Endothelial cell of umbilical vein (primary cell): ENCODE measurements at regions of chr1 and their contacts with region 1.

Region 1: DNA sequence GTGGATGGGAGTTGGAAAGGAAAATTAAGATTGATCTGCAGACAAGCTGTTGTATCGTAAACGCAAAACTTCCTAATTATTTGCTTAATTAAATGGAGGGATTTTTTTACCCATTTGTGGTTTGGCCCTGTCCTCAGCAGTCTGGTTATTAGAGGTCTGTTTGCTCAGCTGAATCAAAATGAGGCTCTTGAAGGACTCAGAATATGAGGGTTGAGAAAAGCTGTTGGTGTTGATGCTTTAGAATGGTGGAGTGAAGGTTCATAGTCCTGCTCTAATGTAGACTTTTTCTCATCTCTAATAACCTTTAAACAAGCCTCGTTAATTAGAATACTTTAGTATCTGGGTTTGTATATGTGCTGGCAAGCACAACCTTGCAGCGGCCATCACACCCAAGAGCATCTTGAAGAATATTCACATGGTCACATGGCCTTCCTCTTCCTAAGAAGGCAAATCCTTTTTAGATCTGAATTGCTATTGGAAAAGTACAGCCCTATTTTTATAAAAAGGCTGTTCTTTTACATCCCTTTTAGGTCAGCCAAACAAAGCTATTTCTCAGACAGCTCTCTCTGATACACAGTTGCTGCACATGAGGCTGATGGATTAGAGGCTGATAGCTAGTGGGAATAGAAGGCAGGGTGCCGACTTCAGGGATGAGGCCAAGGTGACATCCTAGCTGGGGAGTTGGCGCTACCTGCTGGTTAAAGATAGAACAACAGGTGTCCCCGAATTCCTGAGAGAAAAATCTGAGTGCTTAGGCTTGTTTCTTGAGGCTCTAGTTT is 53.8 kb downstream of the MACF1 start:
- DNase-seq: peak; percentile 75
- H3K4me3 ChIP-seq: no peak overlapping the region
- H3K27ac ChIP-seq: no peak overlapping the region
- H3K4me1 ChIP-seq: no peaks in the 10 kb centered on the region
- H3K27me3 ChIP-seq: no peaks in the 10 kb centered on the region
- CTCF ChIP-seq: peak; percentile 70 to 71
- POLR2A ChIP-seq: no peak

Region 2: DNA sequence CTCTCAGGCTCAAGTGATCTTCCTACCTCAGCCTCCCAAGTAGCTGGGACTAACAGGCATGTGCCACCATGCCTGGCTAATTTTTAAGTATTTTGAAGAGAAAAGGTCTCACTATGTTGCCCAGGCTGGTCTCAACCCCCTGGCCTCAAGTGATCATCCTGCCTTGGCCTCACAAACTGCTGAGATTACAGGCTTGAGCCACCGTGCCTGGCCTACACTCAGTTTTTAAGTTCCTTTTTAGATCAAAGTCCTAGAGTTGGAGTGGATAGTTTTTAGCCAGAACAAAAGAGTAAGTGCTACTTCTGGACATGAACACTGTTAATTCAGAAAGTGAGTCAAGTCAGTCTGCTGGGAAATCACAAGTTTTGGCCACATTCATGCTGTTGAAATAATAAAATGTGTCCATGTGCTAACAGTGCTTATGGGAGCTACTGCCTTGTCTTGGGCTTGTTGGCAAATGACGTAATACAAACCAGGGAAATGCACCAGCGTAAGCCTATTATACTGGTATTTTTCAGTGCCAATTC is 147.9 kb before region 1 on chr1:
- CTCF ChIA-PET with region 1: interaction called, 10 read pairs
- POLR2A ChIA-PET with region 1: no interaction called
- dilution Hi-C with region 1: no loop called
- intact Hi-C with region 1: no loop called
- DNase-seq: peak; percentile 87
- H3K4me3 ChIP-seq: no peak overlapping the region
- H3K27ac ChIP-seq: peak overlapping the region; percentile 88
- H3K4me1 ChIP-seq: peaks cover 58% of the 10 kb centered on the region
- H3K27me3 ChIP-seq: no peaks in the 10 kb centered on the region
- CTCF ChIP-seq: no peak
- POLR2A ChIP-seq: no peak